A549 (cell line): ENCODE measurements at regions of chr3 and their contacts with region 1.

Region 1: GRCh38 chr3:157201648-157202278 is 41.8 kb upstream of the CCNL1 start:
- DNase-seq: peak; percentile 33 to 57
- ATAC-seq: peak; percentile 66 to 80; a peak in 4 of 6 replicates
- H3K4me3 ChIP-seq: no peak overlapping the region
- H3K27ac ChIP-seq: no peak overlapping the region
- H3K4me1 ChIP-seq: no peaks in the 10 kb centered on the region
- CTCF ChIP-seq: peak; percentile 62
- EP300 ChIP-seq: no peak
- POLR2A ChIP-seq: no peak
- RAD21 ChIP-seq: peak; percentile 56 to 61

Region 2: DNA sequence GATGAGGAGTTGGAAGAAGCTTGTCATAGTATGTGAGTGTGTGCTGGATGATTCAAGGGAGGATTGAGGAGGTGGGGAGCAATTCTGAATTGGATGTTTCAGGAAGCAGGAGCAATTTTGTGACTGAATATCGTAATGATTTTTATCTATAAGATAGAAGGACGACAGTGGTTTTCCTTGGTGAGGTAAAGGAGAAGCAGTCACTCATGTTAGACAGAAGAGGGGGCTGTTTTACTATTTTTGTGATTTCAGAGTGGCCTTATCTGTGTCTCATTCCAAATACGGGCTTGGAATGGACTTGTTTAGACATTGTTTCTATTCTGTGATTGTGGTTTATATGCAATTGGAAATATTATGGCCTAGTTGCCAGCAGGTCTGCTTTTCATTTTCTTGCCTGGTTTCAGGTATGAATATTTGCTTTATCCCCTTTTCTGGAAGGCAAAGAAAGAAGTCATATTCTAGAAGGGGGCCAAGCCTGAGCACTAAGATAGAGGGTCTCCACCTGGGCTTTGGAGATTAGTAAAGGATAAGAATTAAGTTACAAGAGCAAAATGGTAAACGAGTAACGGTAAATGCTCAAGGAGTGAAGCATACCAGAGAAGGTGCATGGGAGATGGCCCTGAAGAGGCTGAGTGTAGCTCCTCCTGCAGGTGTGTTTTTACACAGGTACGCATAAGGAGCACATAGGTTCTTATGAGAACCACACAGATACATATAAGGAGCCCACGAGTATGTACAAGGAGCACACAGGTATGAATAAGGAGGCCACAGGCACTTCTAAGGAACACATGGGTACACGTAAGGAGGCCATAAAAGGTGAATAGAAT is 1206.0 kb before region 1 on chr3:
- CTCF ChIA-PET with region 1: interaction called, 17 read pairs
- POLR2A ChIA-PET with region 1: no interaction called
- DNase-seq: peak; percentile 57 to 60
- ATAC-seq: peak; percentile 97 to 98
- H3K4me3 ChIP-seq: no peak overlapping the region
- H3K27ac ChIP-seq: no peak overlapping the region
- H3K4me1 ChIP-seq: no peaks in the 10 kb centered on the region
- CTCF ChIP-seq: peak; percentile 58
- EP300 ChIP-seq: no peak
- POLR2A ChIP-seq: no peak
- RAD21 ChIP-seq: peak; percentile 70 to 71

Region 3: DNA sequence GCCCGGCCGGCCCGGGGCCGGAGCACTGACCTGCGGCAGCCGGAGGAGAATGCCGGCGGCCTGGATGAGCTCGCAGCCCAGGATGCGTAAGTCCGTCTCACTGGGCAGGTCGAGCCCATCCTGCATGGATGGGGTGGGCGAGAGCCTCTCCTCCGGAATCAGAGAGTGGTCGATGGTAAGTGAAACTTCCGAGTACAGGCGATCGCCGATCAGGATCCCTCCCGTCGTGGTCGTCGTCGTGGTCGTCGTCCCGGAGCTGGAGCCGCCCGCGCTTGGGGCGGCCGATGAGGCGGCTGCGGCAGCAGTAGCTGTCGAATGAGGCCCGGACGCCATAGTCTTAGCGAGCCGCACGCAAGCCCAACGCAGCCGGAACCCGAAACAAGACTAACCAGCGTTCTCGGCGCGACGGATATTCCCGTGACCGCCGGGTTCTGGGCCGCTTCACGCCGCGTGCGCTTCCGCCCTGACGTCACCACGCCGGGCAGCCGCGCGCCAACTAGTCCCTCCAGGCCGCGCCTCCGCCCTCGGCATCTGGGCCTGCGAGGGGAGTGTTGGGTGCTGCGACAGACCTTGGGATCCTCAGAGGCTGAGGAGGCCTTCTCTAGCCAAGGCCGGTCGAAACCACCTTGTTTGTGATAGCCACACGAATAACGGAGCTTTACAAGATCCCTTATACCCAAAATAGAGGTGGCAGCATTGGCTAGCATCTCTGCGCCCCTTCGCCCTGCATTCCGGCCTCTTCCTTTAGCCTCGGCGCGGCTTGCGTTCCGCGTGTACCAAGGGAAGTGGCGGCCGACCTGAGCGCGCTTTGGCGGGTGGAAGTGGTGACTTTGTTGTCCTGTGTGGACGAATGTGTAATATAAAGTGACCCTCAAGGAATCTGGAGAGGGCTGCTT is 41.8 kb before region 1 on chr3 and contains the start of gene CCNL1:
- CTCF ChIA-PET with region 1: interaction called, 10 read pairs
- POLR2A ChIA-PET with region 1: interaction called, 10 read pairs
- DNase-seq: peak; percentile 83 to 99
- ATAC-seq: peak; percentile 92 to 93
- H3K4me3 ChIP-seq: peak within 1 kb of the TSS; percentile 96
- H3K27ac ChIP-seq: peak within 1 kb of the TSS; percentile 98 to 99
- H3K4me1 ChIP-seq: peaks cover 40% of the 10 kb centered on the region
- CTCF ChIP-seq: no peak
- EP300 ChIP-seq: no peak
- POLR2A ChIP-seq: peak; percentile 95
- RAD21 ChIP-seq: no peak
- polyA plus RNA-seq, gene CCNL1: 130 and 170 TPM in 2 replicates

Region 4: DNA sequence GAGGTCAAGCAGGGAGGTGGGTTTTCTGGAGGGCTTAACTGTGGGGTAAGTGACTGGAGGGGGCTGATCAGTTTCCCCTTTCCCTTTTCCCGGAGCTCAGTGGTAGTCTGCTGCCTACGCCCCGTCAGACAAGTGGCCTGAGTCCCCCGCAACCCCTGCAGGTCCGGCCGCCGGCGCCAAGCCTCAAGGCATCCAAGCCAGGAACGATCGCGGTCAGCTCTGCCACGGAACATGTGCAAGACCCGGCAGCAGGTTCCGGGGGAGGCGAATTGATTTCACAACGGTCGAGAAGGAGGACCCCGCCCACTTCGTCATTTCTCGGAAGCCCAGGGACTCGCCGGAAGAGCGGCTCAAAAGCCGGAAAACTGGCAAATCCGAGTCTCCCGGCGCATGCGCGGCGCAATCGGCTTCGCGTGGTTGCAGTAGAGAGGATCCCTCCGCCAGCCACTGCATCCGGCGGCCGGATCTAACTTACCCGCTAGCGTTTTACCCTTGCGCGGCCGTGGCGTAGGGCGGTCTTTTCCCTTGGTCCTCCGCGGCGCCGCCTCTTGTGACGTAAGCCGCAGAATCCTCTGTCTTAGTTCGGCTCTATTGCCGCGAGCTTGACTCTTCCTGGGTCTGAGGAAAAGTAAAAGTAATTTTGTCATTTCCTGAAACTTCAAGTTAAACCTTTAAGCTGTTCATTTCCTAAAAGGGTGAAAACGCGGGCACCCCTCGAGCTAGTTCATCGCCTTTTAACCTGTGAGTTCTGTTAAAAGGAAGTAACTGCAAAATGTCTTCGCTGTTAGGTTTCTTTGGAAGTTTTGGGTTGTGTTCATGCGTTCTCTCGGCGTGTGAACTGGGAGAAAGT is 26.9 kb before region 1 on chr3:
- CTCF ChIA-PET with region 1: interaction called, 14 read pairs
- POLR2A ChIA-PET with region 1: interaction called, 4 read pairs
- DNase-seq: peak; percentile 94 to 100
- ATAC-seq: peak; percentile 93 to 96
- H3K4me3 ChIP-seq: peak overlapping the region; percentile 77
- H3K27ac ChIP-seq: peak overlapping the region; percentile 97 to 98
- H3K4me1 ChIP-seq: peaks cover 7% of the 10 kb centered on the region; the same call in 2 of the 3 replicates
- CTCF ChIP-seq: no peak
- EP300 ChIP-seq: peak in 1 of 2 experiments; percentile 51; a peak in 1 of 5 replicates
- POLR2A ChIP-seq: peak; percentile 92
- RAD21 ChIP-seq: no peak

Region 5: GRCh38 chr3:157445857-157446256 is 244.1 kb after region 1 on chr3:
- CTCF ChIA-PET with region 1: interaction called, 22 read pairs
- POLR2A ChIA-PET with region 1: no interaction called
- DNase-seq: no peak
- ATAC-seq: no peak
- H3K4me3 ChIP-seq: no peak overlapping the region
- H3K27ac ChIP-seq: no peak overlapping the region
- H3K4me1 ChIP-seq: peaks cover 5% of the 10 kb centered on the region; the same call in 1 of the 3 replicates
- CTCF ChIP-seq: no peak
- EP300 ChIP-seq: no peak
- POLR2A ChIP-seq: no peak
- RAD21 ChIP-seq: no peak

Region 6: DNA sequence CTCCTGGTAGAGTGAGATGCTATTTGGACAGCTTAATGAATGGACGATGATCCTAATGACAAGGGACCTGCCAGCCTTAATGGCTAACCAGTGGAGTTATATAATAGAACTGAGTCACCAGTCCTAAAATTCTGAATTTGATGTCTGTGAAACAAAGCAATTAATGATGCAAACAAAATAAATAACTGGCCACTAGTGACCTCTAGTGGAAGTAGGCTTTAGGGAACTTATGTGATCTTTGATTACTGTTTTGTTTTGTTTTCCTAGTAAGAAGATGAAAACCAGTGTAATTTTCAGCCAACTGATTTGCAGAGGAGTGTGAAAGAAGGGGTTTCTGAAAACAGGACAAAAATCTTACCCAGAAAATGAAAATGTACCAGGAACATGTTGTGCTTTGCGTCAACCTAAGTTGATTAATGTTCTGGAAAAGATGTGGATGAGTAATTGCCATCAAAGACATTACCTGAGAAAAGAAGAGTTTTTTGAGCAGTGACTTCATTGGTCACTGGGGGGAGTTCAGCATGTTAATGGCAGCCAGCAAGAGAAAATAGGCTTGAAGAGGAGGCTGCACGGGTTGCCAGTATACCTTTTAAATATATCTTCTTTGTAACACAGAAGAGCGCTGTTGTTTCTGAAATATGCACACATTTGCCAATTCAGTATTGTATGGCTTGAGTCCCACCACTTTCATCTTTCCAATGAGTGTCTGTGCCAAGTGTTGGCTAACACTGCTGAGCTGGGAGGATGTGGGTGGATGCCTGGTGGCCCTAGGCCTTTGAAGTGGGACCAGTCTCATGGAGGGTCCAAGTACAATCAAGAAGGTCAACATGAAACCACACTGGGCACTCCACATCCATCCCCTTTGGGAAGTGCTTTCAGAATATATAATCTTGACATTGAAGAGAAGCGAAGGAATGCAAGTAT is 292.1 kb after region 1 on chr3:
- CTCF ChIA-PET with region 1: interaction called, 188 read pairs
- POLR2A ChIA-PET with region 1: no interaction called
- DNase-seq: peak; percentile 10 to 47
- ATAC-seq: peak; percentile 39 to 64; a peak in 3 of 6 replicates
- H3K4me3 ChIP-seq: no peak overlapping the region
- H3K27ac ChIP-seq: no peak overlapping the region
- H3K4me1 ChIP-seq: no peaks in the 10 kb centered on the region
- CTCF ChIP-seq: peak; percentile 82
- EP300 ChIP-seq: no peak
- POLR2A ChIP-seq: no peak
- RAD21 ChIP-seq: peak; percentile 71 to 80